ENCODE measurements at regions of chr1 and their contacts with region 1.

Region 1: DNA sequence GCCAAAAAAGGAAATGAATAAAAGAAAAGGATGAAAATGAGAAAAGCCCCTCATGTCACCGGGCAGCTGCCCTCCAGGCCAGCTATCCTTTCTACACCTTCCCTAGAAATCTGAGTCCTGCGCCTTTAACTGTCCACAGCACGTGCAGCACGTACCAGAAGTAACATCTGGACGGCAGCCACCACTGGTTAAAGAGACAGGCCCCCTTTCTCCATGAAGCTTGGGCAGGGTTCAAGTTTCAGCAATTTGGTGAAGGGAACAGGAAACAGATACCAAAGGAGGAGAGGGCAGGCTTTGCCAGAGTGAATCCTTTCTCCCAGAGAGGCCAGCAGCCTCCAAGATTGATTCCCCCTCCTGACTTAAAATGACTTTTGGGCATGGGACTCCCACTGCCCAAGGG is 3.6 kb upstream of the KIAA2013 start:
- DNase-seq: no peak
- H3K4me3 ChIP-seq: no peak overlapping the region
- H3K4me3 Mint-ChIP-seq: no peak overlapping the region
- H3K27ac Mint-ChIP-seq: no peak overlapping the region
- H3K4me1 ChIP-seq: peaks cover 4% of the 10 kb centered on the region
- H3K4me1 Mint-ChIP-seq: peaks cover under 1% of the 10 kb centered on the region
- H3K27me3 ChIP-seq: no peaks in the 10 kb centered on the region
- H3K27me3 Mint-ChIP-seq: no peaks in the 10 kb centered on the region
- CTCF ChIP-seq: no peak

Region 2: GRCh38 chr1:11813021-11813420 is 116.8 kb before region 1 on chr1:
- CTCF ChIA-PET with region 1: no interaction called
- POLR2A ChIA-PET with region 1: no interaction called
- intact Hi-C with region 1: no loop called
- DNase-seq: no peak
- H3K4me3 ChIP-seq: no peak overlapping the region
- H3K4me3 Mint-ChIP-seq: no peak overlapping the region
- H3K27ac Mint-ChIP-seq: no peak overlapping the region
- H3K4me1 ChIP-seq: no peaks in the 10 kb centered on the region; the same call in 1 of the 2 replicates
- H3K4me1 Mint-ChIP-seq: no peaks in the 10 kb centered on the region
- H3K27me3 ChIP-seq: no peaks in the 10 kb centered on the region
- H3K27me3 Mint-ChIP-seq: no peaks in the 10 kb centered on the region
- CTCF ChIP-seq: no peak

Region 3: DNA sequence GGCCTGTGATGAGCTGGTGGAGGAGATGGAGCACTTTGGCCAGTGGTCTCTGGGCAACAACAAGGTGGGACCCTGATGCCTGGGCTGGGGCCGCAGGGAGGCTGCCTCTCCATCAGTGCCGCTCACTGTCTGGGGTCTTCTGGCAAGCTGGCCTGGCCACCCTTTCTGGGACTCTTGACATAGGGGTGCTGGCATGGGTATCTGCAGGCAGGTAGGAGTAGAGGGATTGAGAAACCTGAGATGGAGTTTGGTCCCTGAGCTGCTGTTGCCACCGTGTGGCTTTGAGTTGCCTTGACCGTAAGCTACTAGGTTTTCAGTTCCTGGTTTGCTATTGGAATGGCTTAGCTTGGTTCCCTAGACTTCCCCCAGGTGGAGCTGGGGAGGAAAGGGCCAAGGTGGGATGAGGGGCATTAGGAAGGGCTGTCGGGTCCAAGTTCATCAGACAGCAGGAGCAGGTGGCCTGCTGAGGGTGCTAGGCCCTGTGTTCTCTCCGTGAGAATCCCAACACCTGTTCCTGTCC is 37.2 kb after region 1 on chr1:
- CTCF ChIA-PET with region 1: interaction called, 3 read pairs
- POLR2A ChIA-PET with region 1: no interaction called
- intact Hi-C with region 1: loop called (anchors 5 kb)
- DNase-seq: peak; percentile 79 to 84
- H3K4me3 ChIP-seq: no peak overlapping the region
- H3K4me3 Mint-ChIP-seq: no peak overlapping the region
- H3K27ac Mint-ChIP-seq: no peak overlapping the region
- H3K4me1 ChIP-seq: peaks cover 15% of the 10 kb centered on the region
- H3K4me1 Mint-ChIP-seq: peaks cover 11% of the 10 kb centered on the region
- H3K27me3 ChIP-seq: no peaks in the 10 kb centered on the region
- H3K27me3 Mint-ChIP-seq: no peaks in the 10 kb centered on the region
- CTCF ChIP-seq: peak; percentile 67 to 94

Region 4: DNA sequence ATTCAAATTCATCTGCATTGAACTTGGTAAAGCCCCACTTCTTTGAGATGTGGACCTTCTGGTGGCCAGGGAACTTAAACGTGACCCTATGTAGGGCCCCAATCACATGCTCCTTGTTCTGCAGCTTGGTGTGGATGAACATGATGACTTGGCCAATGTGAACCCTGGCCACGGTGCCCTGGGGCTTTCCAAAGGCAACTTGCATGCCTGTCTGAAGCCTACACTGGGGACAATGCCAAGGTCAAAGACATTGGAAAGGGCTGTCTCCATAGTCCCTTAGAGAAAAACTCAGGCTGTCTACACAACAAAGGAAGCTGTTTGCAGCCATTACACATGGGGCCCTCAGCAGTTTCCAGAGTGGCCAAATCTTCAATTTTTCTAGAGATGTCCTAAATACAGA is 291.0 kb after region 1 on chr1:
- CTCF ChIA-PET with region 1: no interaction called
- POLR2A ChIA-PET with region 1: no interaction called
- intact Hi-C with region 1: no loop called
- DNase-seq: no peak
- H3K4me3 ChIP-seq: no peak overlapping the region
- H3K4me3 Mint-ChIP-seq: no peak overlapping the region
- H3K27ac Mint-ChIP-seq: no peak overlapping the region
- H3K4me1 ChIP-seq: peaks cover 8% of the 10 kb centered on the region
- H3K4me1 Mint-ChIP-seq: no peaks in the 10 kb centered on the region
- H3K27me3 ChIP-seq: no peaks in the 10 kb centered on the region
- H3K27me3 Mint-ChIP-seq: no peaks in the 10 kb centered on the region
- CTCF ChIP-seq: no peak

Measured in Caco-2 (cell line).